Activated CD4-positive, alpha-beta T cell treated with anti-CD3 and anti-CD28 coated beads, Interleukin-2, amount 10 ng/mL, durations not matched to agents 7 days and 5 days (primary cell): ENCODE measurements at regions of chr20 and their contacts with region 1.

Region 1: DNA sequence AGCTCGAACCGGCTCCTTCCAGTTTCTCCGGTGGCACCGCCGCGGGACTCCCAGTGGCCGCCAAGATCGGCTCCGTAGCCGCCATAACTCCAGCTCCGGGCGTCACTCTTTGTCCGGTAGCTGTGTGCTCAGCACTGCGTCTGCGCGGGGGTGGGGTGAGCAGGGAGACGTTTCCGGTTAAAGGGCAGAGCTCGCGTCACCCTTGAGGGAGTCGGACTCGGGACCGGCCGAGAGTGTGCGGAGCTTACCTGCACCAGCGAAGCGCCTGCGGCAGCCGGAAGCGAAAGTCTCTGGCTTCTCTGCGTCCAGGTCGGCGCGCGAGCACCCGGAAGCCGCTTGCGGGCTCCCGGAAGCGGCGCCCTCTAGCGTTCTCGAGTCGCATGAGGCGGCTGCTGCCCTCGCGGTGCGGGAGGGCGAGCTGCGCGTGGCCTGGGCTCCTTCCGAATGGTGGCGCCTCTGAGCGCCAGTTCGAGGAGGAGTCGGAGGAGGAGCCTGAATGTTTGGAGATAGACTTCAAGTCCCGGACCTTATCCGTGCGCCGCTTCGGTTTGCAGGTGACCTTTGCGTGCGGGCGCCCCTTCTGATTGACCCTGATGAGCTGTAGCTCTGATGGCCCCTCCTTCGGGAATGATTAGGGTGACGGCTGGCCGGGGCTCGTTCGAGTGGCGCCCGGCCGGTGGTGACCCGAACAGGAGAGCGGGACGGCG is at the start of gene SCAND1:
- DNase-seq: peak; percentile 98
- H3K4me3 Mint-ChIP-seq: peak within 1 kb of the TSS; percentile 96
- H3K27ac Mint-ChIP-seq: peak within 1 kb of the TSS; percentile 99
- H3K4me1 Mint-ChIP-seq: peaks cover 22% of the 10 kb centered on the region
- H3K27me3 Mint-ChIP-seq: no peaks in the 10 kb centered on the region
- total RNA-seq, gene SCAND1: 48.6 to 63.6 TPM

Region 2: DNA sequence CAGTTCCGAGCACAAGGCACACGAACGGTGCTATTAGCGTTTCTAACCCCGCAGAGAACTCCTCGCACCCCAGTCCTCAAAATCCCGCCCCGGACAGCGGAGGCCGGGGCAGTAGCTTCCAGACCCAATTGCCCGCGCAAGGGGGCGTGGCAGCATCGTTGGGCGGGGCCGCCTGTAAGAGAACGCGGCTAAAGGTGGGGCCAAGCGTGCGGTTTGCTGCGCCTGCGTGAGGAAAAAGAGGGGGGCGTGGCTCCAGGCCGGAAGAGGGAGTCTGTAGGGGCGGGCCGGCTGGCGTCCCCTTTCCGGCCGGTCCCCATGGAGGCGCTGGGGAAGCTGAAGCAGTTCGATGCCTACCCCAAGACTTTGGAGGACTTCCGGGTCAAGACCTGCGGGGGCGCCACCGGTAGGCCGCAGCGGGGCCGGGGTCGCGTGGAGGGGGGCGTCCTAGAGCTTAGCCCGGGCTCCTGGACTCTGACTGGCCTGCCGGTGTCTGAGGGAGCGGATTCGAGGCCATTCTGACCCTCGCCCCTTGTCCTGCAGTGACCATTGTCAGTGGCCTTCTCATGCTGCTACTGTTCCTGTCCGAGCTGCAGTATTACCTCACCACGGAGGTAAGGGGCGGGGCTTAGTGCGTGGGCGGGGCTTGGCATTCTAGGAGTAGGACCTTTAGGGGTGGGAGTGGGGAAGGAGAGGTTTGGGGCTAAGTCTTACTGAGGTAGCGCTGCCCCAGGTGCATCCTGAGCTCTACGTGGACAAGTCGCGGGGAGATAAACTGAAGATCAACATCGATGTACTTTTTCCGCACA is 412.4 kb before region 1 on chr20 and contains the start of gene ERGIC3:
- CTCF ChIA-PET with region 1: interaction called, 13 read pairs
- POLR2A ChIA-PET with region 1: no interaction called
- DNase-seq: peak; percentile 97
- H3K4me3 Mint-ChIP-seq: peak within 1 kb of the TSS; percentile 85
- H3K27ac Mint-ChIP-seq: peak within 1 kb of the TSS; percentile 93
- H3K4me1 Mint-ChIP-seq: peaks cover 22% of the 10 kb centered on the region
- H3K27me3 Mint-ChIP-seq: no peaks in the 10 kb centered on the region
- total RNA-seq, gene ERGIC3: 152 to 165 TPM

Region 3: GRCh38 chr20:35741892-35742740 is 212.2 kb before region 1 on chr20 and contains the start of gene RBM39:
- CTCF ChIA-PET with region 1: interaction called, 25 read pairs
- POLR2A ChIA-PET with region 1: interaction called, 12 read pairs
- DNase-seq: peak; percentile 100
- H3K4me3 Mint-ChIP-seq: peak within 1 kb of the TSS; percentile 91
- H3K27ac Mint-ChIP-seq: peak within 1 kb of the TSS; percentile 100
- H3K4me1 Mint-ChIP-seq: peaks cover 40% of the 10 kb centered on the region
- H3K27me3 Mint-ChIP-seq: no peaks in the 10 kb centered on the region
- total RNA-seq, gene RBM39: 374 to 396 TPM

Region 4: GRCh38 chr20:35816339-35816738 is 138.0 kb before region 1 on chr20:
- CTCF ChIA-PET with region 1: no interaction called
- POLR2A ChIA-PET with region 1: no interaction called
- DNase-seq: no peak
- H3K4me3 Mint-ChIP-seq: no peak overlapping the region
- H3K27ac Mint-ChIP-seq: no peak overlapping the region
- H3K4me1 Mint-ChIP-seq: peaks cover 16% of the 10 kb centered on the region
- H3K27me3 Mint-ChIP-seq: no peaks in the 10 kb centered on the region

Region 5: GRCh38 chr20:35968931-35969330 is 14.6 kb after region 1 on chr20:
- CTCF ChIA-PET with region 1: interaction called, 31 read pairs
- POLR2A ChIA-PET with region 1: interaction called, 5 read pairs
- DNase-seq: no peak
- H3K4me3 Mint-ChIP-seq: no peak overlapping the region
- H3K27ac Mint-ChIP-seq: no peak overlapping the region
- H3K4me1 Mint-ChIP-seq: peaks cover 4% of the 10 kb centered on the region
- H3K27me3 Mint-ChIP-seq: peaks cover 2% of the 10 kb centered on the region

Region 6: DNA sequence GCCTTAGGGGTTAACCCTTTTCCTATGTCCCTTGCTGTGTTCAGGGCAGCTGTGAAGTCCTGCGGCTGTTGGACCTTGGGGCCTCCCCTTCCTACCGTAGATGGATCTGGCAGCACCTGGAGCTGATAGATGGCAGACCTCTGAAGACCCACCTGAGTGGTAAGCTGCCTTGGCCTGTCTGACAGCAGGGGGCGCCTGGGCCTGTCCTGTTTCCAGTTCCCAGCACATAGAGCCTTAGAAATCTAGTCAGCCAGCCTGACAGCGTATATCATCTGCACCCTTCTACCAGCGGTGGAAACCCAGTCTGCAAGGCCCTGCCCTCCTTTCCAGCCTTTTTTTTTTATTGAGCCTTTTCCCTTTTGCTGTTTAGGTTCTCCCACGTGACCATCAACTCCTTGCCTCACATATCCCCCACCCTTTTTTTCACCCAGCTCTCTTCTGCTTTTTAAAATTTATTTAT is 40.7 kb after region 1 on chr20:
- CTCF ChIA-PET with region 1: interaction called, 17 read pairs
- POLR2A ChIA-PET with region 1: interaction called, 4 read pairs
- DNase-seq: peak; percentile 86
- H3K4me3 Mint-ChIP-seq: no peak overlapping the region
- H3K27ac Mint-ChIP-seq: no peak overlapping the region
- H3K4me1 Mint-ChIP-seq: peaks cover 4% of the 10 kb centered on the region
- H3K27me3 Mint-ChIP-seq: peaks cover 5% of the 10 kb centered on the region

Region 7: GRCh38 chr20:36035745-36036144 is 81.4 kb after region 1 on chr20:
- CTCF ChIA-PET with region 1: no interaction called
- POLR2A ChIA-PET with region 1: no interaction called
- DNase-seq: no peak
- H3K4me3 Mint-ChIP-seq: no peak overlapping the region
- H3K27ac Mint-ChIP-seq: no peak overlapping the region
- H3K4me1 Mint-ChIP-seq: no peaks in the 10 kb centered on the region
- H3K27me3 Mint-ChIP-seq: peaks cover 2% of the 10 kb centered on the region

Region 8: GRCh38 chr20:36113566-36114250 is 159.4 kb after region 1 on chr20:
- CTCF ChIA-PET with region 1: no interaction called
- POLR2A ChIA-PET with region 1: no interaction called
- DNase-seq: no peak
- H3K4me3 Mint-ChIP-seq: no peak overlapping the region
- H3K27ac Mint-ChIP-seq: no peak overlapping the region
- H3K4me1 Mint-ChIP-seq: no peaks in the 10 kb centered on the region
- H3K27me3 Mint-ChIP-seq: peaks cover 5% of the 10 kb centered on the region